ENCODE measurements at regions of chr7 and their contacts with region 1.

Region 1: DNA sequence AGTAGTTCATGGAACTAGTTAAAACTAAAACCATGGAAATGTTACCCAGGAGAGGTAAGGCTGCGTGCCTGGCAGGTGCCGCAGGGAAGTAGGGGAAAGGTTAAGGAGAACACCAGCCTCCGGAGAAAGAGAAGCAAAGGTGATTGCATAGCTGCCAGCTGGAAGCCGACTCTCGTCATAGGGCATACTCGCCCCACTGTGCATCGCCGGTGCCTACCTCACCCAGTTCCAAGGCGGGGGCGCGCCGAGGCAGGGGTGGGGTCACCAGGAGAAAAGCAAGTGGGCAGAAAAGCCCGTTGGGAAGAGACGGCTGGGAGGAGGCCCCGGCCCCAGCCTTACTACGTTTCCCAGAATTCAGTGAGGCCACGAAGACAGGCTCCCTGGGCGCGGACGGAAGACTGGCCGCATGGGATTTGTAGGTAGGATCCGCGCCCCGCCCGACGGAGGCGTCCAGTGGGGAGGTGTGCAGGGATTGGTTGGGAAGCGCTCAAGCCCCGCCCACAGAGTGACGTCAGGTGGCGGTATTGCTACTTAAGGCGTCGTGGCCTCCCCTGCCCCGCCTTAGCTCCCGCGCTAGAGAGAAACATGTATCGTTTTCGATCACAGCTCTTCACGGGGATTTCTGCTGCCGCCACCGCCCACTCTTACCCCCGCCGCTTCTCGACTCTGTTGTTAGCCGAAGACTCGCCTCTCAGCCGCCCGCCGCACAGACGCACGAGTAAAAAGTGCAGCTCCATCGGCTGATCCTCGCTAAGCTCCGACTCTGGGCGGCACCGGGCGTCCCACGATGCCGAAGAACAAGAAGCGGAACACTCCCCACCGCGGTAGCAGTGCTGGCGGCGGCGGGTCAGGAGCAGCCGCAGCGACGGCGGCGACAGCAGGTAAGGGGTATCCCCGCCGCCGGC is at the start of gene IFRD1:
- DNase-seq: peak; percentile 99
- ATAC-seq: peak; percentile 90
- H3K4me3 Mint-ChIP-seq: peak within 1 kb of the TSS; percentile 94
- H3K27ac Mint-ChIP-seq: peak within 1 kb of the TSS; percentile 99
- H3K4me1 Mint-ChIP-seq: peaks cover 33% of the 10 kb centered on the region
- H3K27me3 Mint-ChIP-seq: no peaks in the 10 kb centered on the region
- CTCF ChIP-seq: no peak
- total RNA-seq, gene IFRD1: 30.5 to 37.9 TPM (median 31.2 TPM) in 3 replicates

Region 2: DNA sequence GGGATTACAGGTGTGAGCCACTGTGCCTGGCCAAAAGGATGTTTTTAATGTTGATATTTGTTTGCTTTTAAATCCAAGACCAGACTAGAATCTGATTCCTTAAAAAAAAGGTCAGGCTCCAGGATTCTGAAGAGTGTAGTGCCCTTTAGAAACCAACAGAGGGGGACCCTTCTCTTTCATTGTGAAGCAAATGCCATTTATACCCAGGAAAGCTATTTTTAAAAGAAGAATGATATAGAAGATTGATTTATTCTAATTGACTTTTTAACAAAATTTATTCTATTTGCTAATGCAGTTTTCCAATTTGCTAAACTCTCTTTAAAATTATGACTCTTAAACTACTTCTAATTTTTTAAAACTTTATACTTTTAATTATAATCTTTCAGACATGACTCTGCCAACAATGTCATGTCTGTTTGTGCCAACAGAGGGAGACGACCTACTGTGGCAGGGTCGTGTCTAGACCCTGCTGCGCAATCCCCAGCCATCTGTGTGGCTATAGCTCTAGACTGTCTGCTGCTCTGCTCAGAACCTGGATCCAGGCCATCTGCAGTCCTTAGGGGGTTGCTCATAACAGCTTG is 686.8 kb before region 1 on chr7:
- CTCF ChIA-PET with region 1: interaction called, 11 read pairs
- POLR2A ChIA-PET with region 1: interaction called, 4 read pairs
- DNase-seq: peak; percentile 54
- ATAC-seq: peak; percentile 98
- H3K4me3 Mint-ChIP-seq: no peak overlapping the region
- H3K27ac Mint-ChIP-seq: no peak overlapping the region
- H3K4me1 Mint-ChIP-seq: no peaks in the 10 kb centered on the region
- H3K27me3 Mint-ChIP-seq: no peaks in the 10 kb centered on the region
- CTCF ChIP-seq: peak; percentile 50

Region 3: DNA sequence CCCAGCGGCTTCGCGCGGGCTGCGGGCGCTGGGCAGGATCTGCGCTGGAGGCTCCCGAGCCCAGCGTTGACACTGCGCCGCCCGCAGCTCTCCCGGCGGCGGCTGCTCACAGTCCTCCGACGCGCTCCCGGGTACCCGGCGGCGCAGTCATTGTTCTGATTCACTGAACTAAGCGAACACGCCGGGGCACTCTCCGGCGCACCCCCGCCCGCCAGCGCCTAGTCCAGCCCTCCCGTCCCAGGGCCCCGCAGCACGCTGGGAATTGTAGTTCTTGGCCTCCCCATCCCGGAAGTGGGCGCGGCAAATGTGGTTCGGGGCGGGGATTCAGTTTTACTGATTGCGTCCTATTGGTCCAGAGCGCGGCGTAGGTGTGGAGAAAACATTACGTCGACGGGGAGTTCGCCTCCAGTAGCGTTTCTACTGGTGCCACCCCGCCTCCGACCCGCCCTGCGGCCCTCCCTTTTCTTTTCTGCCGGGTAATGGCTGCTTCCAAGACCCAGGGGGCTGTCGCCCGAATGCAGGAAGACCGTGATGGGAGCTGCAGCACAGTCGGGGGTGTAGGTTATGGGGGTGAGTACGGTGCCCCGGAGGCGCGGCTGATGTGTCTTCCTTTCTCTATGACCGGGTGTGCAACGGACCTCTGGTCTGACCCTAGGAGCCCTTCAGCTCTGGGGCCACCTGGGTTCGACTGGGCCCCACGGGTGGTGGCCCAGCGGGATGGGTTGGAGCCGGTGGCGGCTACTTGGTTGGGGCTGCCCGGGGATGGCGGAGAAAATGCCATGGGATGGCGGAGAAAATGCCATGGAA is 243.7 kb before region 1 on chr7 and contains the starts of genes DOCK4 and ZNF277:
- CTCF ChIA-PET with region 1: no interaction called
- POLR2A ChIA-PET with region 1: interaction called, 18 read pairs
- DNase-seq: peak; percentile 99
- ATAC-seq: peak; percentile 88
- H3K4me3 Mint-ChIP-seq: peak within 1 kb of the TSS; percentile 89
- H3K27ac Mint-ChIP-seq: peak within 1 kb of the TSS; percentile 63
- H3K4me1 Mint-ChIP-seq: peaks cover 42% of the 10 kb centered on the region
- H3K27me3 Mint-ChIP-seq: no peaks in the 10 kb centered on the region
- CTCF ChIP-seq: no peak
- total RNA-seq, gene DOCK4: 13.3 to 20.4 TPM (median 15.2 TPM) in 3 replicates
- total RNA-seq, gene ZNF277: 18.3 to 22.5 TPM (median 20.6 TPM) in 3 replicates